Keratinocyte (primary cell): ENCODE measurements at regions of chr1 and their contacts with region 1.

Region 1: DNA sequence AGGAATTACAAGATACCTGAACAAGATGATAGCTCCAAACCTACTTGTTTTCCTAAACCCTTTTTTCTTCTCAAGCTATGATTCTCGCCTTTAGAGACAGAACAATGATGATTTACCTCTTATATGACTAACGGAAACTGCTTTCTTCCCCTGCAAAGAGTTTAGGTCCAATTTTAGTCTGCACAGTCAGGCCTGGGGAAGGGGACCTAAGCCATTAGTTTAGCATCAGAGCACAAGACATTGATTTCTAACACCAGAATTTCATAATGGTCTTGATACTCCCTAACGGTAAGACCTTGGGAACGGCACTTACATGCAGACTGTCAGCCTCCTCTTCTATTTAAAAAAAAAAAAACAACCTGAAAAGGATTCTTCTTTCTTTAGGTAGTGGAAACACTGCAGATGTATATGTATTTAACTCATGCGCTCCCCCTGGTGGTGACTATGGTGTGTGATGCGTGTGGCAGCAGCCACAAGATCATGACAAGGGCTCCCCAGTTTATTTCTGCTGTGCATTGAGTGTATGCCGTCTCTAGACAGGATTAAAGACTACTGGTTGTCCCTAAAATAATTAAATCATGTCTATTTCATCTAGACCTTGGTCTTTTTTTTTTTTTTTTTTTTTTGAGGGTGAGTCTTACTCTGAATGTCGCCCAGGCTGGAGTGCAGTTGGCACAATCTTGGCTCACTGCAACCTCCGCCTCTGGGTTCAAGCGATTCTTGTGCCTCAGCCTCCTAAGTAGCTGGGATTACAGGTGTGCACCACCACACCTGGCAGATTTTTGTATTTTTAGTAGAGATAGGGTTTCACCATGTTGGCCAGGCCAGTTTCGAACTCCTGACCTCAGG is 37.3 kb upstream of the TMEM222 start:
- DNase-seq: peak; percentile 38
- H3K4me3 ChIP-seq: no peak overlapping the region
- H3K27ac ChIP-seq: no peak overlapping the region
- H3K4me1 ChIP-seq: no peaks in the 10 kb centered on the region
- H3K27me3 ChIP-seq: no peaks in the 10 kb centered on the region
- CTCF ChIP-seq: peak; percentile 76 to 82 (median 80)

Region 2: GRCh38 chr1:27044613-27045151 is 240.0 kb before region 1 on chr1:
- dilution Hi-C with region 1: loop called (anchors 25 kb)
- DNase-seq: peak; percentile 23
- H3K4me3 ChIP-seq: peak overlapping the region in 1 of 3 experiments; percentile 14
- H3K27ac ChIP-seq: no peak overlapping the region
- H3K4me1 ChIP-seq: peaks cover 17% of the 10 kb centered on the region
- H3K27me3 ChIP-seq: no peaks in the 10 kb centered on the region
- CTCF ChIP-seq: peak; percentile 91 to 98 (median 96)

Region 3: DNA sequence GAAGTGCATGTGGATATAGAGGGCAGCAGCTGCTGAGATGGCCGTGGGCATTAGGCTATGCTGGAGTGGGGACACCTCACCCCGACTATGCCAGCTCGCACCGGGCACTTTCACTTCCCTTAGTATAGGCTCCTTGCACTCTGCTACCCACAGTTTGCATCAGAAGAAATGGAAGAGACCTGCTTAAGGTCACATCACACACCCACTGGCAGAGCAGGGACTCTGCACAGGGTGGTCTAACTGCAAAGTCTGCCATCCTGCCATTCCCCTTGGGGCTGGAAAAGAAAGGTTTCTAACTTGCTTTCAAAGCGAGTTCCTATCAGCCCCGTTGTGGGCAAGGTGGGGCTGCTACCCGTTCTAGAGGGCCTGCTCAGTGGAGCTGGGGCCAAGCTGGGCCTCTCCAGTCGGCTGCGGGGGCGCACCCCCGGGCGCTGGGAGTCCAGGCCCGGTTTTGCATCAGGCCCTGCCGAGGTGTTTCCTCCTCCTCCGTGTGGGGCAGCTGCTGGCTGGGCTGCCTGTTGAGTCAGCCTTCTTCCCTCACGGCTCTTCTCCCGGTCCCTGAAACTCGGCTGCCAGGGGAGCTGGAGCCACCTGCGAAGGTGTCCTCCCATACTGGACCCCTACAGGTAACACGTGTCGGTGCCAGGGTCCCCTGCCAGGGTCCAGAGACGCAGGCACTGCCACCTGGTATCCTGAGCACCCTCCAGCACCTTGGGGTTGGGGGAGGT is 57.0 kb after region 1 on chr1 and contains the start of gene SYTL1:
- dilution Hi-C with region 1: no loop called
- DNase-seq: no peak
- H3K4me3 ChIP-seq: peak within 1 kb of the TSS; percentile 62 to 89 (median 66)
- H3K27ac ChIP-seq: peak within 1 kb of the TSS; percentile 87
- H3K4me1 ChIP-seq: peaks cover 28% of the 10 kb centered on the region
- H3K27me3 ChIP-seq: no peaks in the 10 kb centered on the region
- CTCF ChIP-seq: peak in 1 of 3 experiments; percentile 15
- polyA plus RNA-seq, gene SYTL1: 15.5 to 34.0 TPM (median 15.6 TPM) in 3 replicates

Region 4: DNA sequence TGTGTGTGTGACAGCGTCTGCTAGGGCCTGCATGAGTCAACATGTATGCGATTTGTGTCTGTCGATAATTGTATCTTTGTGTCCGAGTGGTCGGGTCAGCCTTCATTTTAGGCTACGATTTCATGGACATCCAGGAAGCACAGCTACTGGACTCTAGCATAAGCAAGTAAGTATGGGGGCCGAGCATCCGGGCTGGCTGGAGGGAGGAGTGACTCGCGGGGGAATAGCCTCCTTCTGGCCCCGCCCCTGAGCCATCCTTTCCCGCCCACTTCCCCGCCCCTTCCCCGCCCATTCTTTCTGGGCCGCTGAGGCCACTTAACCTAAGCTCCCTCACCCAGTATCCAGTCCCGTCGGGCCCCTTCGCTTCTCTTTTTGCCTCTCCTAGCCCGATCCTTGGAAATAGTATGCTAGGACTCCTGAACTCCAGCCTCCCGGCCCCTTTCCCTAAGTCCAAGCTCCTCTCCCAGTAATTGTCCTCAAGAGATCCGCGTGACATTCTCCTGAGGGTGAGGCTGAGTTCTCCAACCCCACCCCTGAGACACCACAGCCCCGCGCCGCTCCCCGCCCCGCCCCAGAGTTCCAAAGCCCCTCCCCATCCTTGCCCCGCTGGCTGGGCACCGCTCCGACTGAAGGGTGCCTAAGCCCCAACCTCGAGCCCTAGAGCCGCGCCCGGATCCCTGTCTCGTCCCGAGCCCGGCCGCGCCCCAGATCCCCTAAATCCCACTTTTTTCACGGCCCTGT is 80.9 kb after region 1 on chr1:
- dilution Hi-C with region 1: no loop called
- DNase-seq: no peak
- H3K4me3 ChIP-seq: peak overlapping the region; percentile 65 to 89 (median 68)
- H3K27ac ChIP-seq: peak overlapping the region; percentile 78
- H3K4me1 ChIP-seq: peaks cover 31% of the 10 kb centered on the region
- H3K27me3 ChIP-seq: no peaks in the 10 kb centered on the region
- CTCF ChIP-seq: no peak

Region 5: DNA sequence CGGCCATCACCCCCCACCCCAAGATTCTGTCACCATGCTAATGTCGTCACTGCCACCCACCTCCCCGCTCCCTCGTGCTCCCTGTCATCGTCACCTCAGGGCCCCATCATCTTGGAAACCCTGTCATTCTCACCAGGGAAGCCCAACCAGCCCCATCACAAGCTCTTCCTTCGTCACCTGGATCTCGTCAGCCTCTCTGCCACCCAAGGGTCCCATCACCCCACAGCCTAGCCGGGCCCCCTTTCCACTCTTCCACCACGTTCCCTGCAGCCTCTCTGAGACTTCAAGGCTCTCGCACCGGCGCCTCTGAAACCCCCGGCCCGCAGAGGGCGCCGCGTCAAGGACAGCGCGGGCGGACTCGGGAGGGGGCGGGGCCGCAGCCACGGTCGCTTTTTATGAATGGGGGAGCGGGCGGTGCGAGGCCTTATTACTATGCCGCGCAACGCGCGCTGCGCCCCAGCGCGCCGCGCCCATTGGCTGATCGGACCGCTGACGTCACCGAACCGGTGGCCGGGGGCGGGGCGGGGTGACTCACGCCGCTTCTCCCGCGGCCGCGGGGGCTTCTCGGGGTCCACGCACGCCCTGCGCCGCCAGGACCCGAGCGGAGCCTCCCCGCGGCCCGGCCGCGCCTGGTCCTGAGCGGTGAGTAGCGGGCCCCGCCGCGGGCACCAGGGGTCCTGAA is 107.6 kb after region 1 on chr1 and contains the start of gene GPR3:
- dilution Hi-C with region 1: no loop called
- DNase-seq: peak; percentile 68
- H3K4me3 ChIP-seq: peak within 1 kb of the TSS; percentile 66 to 86 (median 84)
- H3K27ac ChIP-seq: peak within 1 kb of the TSS; percentile 81
- H3K4me1 ChIP-seq: peaks cover 21% of the 10 kb centered on the region
- H3K27me3 ChIP-seq: no peaks in the 10 kb centered on the region
- CTCF ChIP-seq: peak; percentile 33 to 66 (median 66)
- polyA plus RNA-seq, gene GPR3: 0.94 to 2.5 TPM (median 1.4 TPM) in 3 replicates

Region 6: GRCh38 chr1:27445177-27445936 is 160.7 kb after region 1 on chr1:
- dilution Hi-C with region 1: no loop called
- DNase-seq: no peak
- H3K4me3 ChIP-seq: no peak overlapping the region
- H3K27ac ChIP-seq: no peak overlapping the region
- H3K4me1 ChIP-seq: no peaks in the 10 kb centered on the region
- H3K27me3 ChIP-seq: no peaks in the 10 kb centered on the region
- CTCF ChIP-seq: no peak